PC-9 (cell line): ENCODE measurements at regions of chr16 and their contacts with region 1.

Region 1: GRCh38 chr16:11871193-11871592 is 19.9 kb upstream of the RSL1D1 start:
- DNase-seq: no peak
- H3K4me3 ChIP-seq: no peak overlapping the region
- H3K27ac ChIP-seq: no peak overlapping the region
- H3K4me1 ChIP-seq: peaks cover 30% of the 10 kb centered on the region
- H3K27me3 ChIP-seq: no peaks in the 10 kb centered on the region
- CTCF ChIP-seq: no peak

Region 2: GRCh38 chr16:11797166-11797956 is 73.8 kb before region 1 on chr16 and contains the start of gene ZC3H7A:
- CTCF ChIA-PET with region 1: interaction called, 15 read pairs
- POLR2A ChIA-PET with region 1: interaction called, 3 read pairs
- intact Hi-C with region 1: no loop called
- DNase-seq: peak; percentile 89 to 98
- H3K4me3 ChIP-seq: peak within 1 kb of the TSS; percentile 97
- H3K27ac ChIP-seq: peak within 1 kb of the TSS; percentile 73
- H3K4me1 ChIP-seq: peaks cover 15% of the 10 kb centered on the region
- H3K27me3 ChIP-seq: no peaks in the 10 kb centered on the region
- CTCF ChIP-seq: no peak; the same call in 1 of the 2 replicates
- total RNA-seq, gene ZC3H7A: 52.3 and 63.5 TPM in 2 replicates

Region 3: DNA sequence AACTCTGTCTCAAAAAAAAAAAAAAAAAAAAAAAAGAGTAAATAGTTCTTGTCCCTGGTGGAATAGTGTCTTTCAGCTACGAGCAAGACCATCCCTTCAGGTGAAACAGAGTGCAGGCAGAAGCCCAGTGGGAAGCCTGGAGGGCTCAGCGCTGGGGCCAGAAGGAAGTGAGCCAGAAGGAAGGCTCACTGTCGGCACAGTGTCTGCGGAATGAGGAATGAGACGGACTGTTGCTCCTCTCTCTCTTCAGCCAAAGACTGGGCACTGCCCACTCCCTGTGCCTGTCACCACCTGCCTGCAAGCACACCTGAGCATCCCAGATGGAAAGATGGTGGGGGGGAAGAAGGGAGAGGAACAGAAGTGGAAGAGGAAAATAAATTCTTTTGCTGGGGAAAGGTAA is 27.3 kb before region 1 on chr16:
- CTCF ChIA-PET with region 1: no interaction called
- POLR2A ChIA-PET with region 1: interaction called, 39 read pairs
- intact Hi-C with region 1: no loop called
- DNase-seq: no peak
- H3K4me3 ChIP-seq: no peak overlapping the region
- H3K27ac ChIP-seq: no peak overlapping the region
- H3K4me1 ChIP-seq: peaks cover 2% of the 10 kb centered on the region
- H3K27me3 ChIP-seq: no peaks in the 10 kb centered on the region
- CTCF ChIP-seq: no peak

Region 4: DNA sequence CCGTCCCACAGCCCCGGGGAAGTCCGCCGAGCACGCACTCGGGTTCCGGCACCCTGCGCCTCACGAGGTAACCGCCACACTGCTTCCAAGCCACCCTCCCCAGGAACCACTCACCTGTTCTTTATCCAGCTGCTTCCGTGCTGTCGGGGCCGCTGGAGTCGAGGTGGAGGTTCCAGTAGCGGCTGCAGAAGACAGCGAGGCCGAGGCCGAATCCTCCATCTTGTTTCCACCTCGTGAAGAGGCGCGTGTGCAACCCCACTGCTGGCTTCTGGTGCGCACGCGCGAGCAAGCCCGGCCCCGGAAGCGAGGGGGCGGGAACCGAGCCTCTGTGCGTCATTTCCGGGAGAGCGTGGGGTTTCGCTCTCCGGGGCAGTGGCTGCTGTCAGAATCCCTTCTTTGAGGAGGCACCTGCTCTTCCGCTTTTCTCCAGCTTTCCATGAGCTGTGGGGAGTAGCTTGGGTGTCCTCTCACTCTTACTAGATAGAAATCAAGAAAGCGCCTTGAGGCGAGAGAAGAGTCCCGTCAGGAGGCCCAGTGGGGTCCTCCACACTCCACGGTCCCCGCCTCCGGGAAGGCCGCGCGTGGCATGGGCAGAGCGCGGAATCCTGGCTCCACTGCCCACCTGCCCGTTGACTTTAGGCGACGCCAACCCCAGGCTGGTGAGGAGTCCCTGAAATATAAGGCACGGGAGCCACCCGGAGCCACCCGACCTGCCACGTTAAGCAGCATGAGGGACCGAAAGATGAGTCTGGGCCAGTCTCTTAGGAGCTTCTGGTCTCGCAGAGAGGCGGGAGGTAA is 19.7 kb before region 1 on chr16 and contains the start of gene RSL1D1:
- CTCF ChIA-PET with region 1: interaction called, 4 read pairs
- POLR2A ChIA-PET with region 1: no interaction called
- intact Hi-C with region 1: loop called (anchors 2 kb)
- DNase-seq: peak; percentile 84 to 96
- H3K4me3 ChIP-seq: peak within 1 kb of the TSS; percentile 83
- H3K27ac ChIP-seq: peak within 1 kb of the TSS; percentile 61
- H3K4me1 ChIP-seq: peaks cover 27% of the 10 kb centered on the region
- H3K27me3 ChIP-seq: no peaks in the 10 kb centered on the region
- CTCF ChIP-seq: no peak
- total RNA-seq, gene RSL1D1: 172 and 226 TPM in 2 replicates